H1 (cell line): ENCODE measurements at regions of chr10 and their contacts with region 1.

Region 1: DNA sequence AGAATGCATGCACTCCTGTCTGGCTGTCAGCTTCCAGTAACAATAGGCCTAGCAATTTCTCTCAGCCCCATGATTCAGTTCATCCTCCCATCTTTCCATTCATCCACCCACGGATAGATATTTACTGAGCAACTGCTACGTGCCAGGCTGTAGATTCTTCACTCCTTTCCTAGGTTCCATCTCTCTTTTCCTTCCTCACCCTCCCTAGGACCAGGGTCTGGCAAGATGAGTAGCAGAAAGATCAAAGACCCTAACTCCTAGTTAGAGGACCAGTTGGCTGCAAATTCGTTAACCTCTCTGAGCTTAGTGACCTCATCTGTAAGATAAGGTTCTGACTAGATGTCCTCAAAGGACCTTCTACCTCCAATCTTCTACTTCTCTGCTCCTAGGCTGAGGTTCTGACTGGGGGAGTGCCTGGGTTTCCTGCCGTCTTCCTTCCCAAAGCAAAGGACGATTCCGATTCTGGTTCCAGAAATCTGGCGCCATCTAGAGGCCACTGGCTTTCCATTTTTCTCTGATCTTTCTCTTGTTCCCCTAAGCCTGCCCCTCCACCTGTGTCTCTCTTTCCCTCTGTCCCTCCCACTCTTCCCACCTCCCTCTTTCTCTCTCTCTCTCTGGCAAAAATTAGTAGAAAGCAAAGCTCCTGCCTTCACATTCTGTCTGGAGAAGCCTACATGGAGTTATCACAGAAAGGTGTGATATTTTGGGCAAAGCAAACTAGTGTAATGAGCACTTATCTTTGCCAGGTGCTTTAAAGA is 26.2 kb downstream of the TBATA start:
- DNase-seq: peak; percentile 53 to 87
- H3K4me3 ChIP-seq: no peak overlapping the region
- H3K27ac ChIP-seq: no peak overlapping the region
- H3K4me1 ChIP-seq: peaks cover 0 to 18% (median 12%) of the 10 kb centered on the region in 4 experiments; a peak in 6 of 7 replicates
- H3K27me3 ChIP-seq: no peaks in the 10 kb centered on the region
- CTCF ChIP-seq: peak; percentile 36 to 74 (median 65); a peak in 3 of 4 replicates
- EP300 ChIP-seq: no peak
- POLR2A ChIP-seq: no peak
- RAD21 ChIP-seq: peak; percentile 78 to 80

Region 2: GRCh38 chr10:70549962-70550458 is 208.9 kb before region 1 on chr10:
- CTCF ChIA-PET with region 1: interaction called, 35 read pairs
- POLR2A ChIA-PET with region 1: no interaction called
- DNase-seq: peak in 1 of 2 experiments; percentile 92
- H3K4me3 ChIP-seq: no peak overlapping the region
- H3K27ac ChIP-seq: no peak overlapping the region
- H3K4me1 ChIP-seq: no peaks in the 10 kb centered on the region; a peak in 1 of 7 replicates
- H3K27me3 ChIP-seq: no peaks in the 10 kb centered on the region
- CTCF ChIP-seq: peak; percentile 78 to 84 (median 82)
- EP300 ChIP-seq: no peak
- POLR2A ChIP-seq: no peak
- RAD21 ChIP-seq: peak; percentile 92 to 94

Region 3: DNA sequence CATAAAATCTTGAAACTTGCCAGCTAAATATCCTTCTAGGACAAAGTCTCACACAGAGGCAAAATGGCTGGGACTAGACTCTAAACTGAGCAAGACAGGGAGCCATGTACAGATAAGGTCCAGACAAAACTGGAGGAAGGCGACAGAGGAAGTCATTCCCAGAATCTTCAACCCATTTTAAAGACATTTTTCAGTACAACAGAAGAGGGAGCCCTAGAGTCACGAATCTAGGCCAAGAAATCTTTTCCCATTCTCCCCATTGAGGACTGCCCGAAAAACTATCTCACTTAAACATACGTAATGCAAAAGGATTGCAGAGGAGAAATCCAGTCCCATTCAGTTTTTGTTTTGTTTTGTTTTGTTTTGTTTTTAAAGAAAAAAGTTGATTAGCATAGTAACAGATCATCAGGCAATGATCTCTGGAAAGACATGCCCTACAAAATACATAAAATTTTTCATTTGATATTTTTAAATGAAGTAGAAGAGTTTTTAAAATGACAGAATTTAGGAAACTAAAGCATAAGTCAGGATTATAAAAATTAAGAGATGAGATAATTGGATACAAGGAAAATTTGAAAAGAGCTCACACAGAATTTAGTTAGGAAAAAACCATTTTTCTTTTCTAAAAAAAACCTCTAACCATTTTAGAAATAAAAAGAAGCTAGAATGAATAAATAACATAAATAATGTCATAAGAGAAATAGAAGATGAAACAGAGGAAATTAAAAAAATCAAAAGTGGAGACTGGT is 139.5 kb before region 1 on chr10:
- CTCF ChIA-PET with region 1: interaction called, 25 read pairs
- POLR2A ChIA-PET with region 1: interaction called, 4 read pairs
- DNase-seq: no peak
- H3K4me3 ChIP-seq: no peak overlapping the region
- H3K27ac ChIP-seq: no peak overlapping the region
- H3K4me1 ChIP-seq: peaks cover 3 to 14% (median 10%) of the 10 kb centered on the region in 4 experiments
- H3K27me3 ChIP-seq: no peaks in the 10 kb centered on the region; a peak in 1 of 7 replicates
- CTCF ChIP-seq: peak in 2 of 3 experiments; percentile 63 to 67; a peak in 2 of 4 replicates
- EP300 ChIP-seq: no peak
- POLR2A ChIP-seq: no peak
- RAD21 ChIP-seq: peak; percentile 87 to 88

Region 4: GRCh38 chr10:70705121-70705861 is 53.6 kb before region 1 on chr10:
- CTCF ChIA-PET with region 1: no interaction called
- POLR2A ChIA-PET with region 1: no interaction called
- DNase-seq: no peak
- H3K4me3 ChIP-seq: no peak overlapping the region
- H3K27ac ChIP-seq: no peak overlapping the region
- H3K4me1 ChIP-seq: no peaks in the 10 kb centered on the region; a peak in 1 of 7 replicates
- H3K27me3 ChIP-seq: no peaks in the 10 kb centered on the region
- CTCF ChIP-seq: no peak
- EP300 ChIP-seq: no peak
- POLR2A ChIP-seq: no peak
- RAD21 ChIP-seq: no peak

Region 5: DNA sequence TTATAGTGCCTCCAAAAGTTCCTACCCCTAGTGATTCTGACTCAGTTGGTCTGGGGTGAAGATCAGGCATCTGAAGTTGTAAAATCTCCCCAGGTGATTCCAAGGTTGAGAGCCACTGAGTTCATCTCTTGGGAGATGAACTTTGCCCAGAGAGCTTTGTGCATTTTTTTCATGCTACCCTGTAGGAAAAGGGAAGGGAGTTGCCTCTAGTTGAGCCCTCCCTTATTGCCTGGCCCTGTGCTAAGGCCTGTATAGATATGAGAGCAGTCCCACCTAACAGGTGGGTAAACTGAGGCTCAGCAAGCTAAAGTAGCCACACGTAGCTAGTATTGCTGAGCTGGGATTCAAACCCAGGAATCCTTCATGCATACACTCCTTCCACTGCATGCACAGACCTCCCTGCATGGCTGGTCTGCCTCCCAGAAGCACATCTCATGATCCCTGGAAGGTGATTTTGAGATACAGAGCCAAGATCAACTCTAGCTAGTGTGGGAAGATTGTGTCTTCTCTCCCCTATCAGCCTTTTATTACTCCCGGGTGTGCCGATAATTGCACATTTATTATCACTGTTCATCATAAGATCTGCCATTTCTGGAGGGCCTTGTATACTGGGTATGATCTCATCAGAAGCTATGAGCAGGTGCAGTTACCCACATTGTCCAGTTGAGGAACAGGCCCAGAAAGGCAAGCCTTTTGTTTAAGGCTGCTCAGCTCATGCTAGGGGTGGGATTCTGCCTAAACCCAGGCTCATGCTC is 20.8 kb before region 1 on chr10:
- CTCF ChIA-PET with region 1: interaction called, 11 read pairs
- POLR2A ChIA-PET with region 1: no interaction called
- DNase-seq: no peak
- H3K4me3 ChIP-seq: no peak overlapping the region
- H3K27ac ChIP-seq: no peak overlapping the region
- H3K4me1 ChIP-seq: peaks cover 0 to 4% (median 0%) of the 10 kb centered on the region in 4 experiments; a peak in 1 of 7 replicates
- H3K27me3 ChIP-seq: peaks cover 0 to 2% (median 0%) of the 10 kb centered on the region in 4 experiments; a peak in 1 of 7 replicates
- CTCF ChIP-seq: no peak
- EP300 ChIP-seq: no peak
- POLR2A ChIP-seq: no peak
- RAD21 ChIP-seq: no peak

Region 6: GRCh38 chr10:70774810-70775678 is 16.1 kb after region 1 on chr10:
- CTCF ChIA-PET with region 1: interaction called, 15 read pairs
- POLR2A ChIA-PET with region 1: no interaction called
- DNase-seq: peak in 1 of 2 experiments; percentile 33
- H3K4me3 ChIP-seq: no peak overlapping the region
- H3K27ac ChIP-seq: no peak overlapping the region
- H3K4me1 ChIP-seq: peaks cover 0 to 3% (median 0%) of the 10 kb centered on the region in 4 experiments; a peak in 2 of 7 replicates
- H3K27me3 ChIP-seq: no peaks in the 10 kb centered on the region
- CTCF ChIP-seq: no peak
- EP300 ChIP-seq: no peak
- POLR2A ChIP-seq: no peak
- RAD21 ChIP-seq: no peak